A549 (cell line): ENCODE measurements at regions of chr3 and their contacts with region 1.

Region 1: DNA sequence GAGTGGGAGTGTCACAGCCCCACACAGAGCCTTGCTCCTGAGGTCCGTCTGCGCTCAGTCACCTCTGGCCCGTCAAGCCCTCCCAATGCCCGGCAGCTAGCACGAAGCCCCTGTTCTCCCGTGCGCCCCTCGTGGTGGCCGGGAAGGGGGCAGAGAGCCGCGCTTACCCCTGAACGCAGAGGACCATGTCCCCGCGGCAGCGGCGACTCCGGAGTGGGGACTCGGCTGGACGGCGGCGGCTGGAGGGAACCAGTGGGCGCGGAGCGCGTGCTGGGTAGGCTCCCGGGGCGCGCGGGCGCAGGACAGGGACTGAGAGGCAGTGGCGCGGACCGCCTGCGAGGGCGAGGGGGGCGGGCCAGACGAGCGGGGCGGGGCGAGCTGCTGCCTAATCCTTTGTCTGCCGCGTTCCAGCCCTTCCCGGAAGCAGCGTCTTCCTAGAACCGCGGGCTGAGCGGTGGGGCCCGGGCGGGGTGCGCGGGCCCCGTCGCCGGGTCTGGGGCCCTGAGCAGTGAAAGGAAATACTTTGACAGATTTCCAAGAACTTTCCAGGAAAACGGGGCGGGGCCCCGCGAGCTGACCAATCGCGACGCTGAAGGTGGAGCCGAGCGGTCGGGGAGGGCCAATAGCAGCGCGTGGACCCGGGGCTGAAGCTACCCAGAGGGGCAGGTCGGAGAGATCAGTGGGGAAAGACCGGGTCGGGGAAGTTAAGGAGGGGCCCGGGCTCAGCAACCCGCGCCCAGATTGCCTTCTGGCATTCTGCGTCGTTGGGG is at the start of gene CISH:
- DNase-seq: peak; percentile 78 to 83
- ATAC-seq: peak; percentile 65 to 87
- H3K4me3 ChIP-seq: peak within 1 kb of the TSS; percentile 50
- H3K27ac ChIP-seq: peak within 1 kb of the TSS; percentile 72 to 89
- H3K4me1 ChIP-seq: peaks cover 9% of the 10 kb centered on the region
- CTCF ChIP-seq: peak; percentile 15; the same call in 1 of the 3 replicates
- EP300 ChIP-seq: no peak
- POLR2A ChIP-seq: peak; percentile 43; the same call in 1 of the 2 replicates
- RAD21 ChIP-seq: no peak
- polyA plus RNA-seq, gene CISH: 0.43 and 0.95 TPM in 2 replicates

Region 2: DNA sequence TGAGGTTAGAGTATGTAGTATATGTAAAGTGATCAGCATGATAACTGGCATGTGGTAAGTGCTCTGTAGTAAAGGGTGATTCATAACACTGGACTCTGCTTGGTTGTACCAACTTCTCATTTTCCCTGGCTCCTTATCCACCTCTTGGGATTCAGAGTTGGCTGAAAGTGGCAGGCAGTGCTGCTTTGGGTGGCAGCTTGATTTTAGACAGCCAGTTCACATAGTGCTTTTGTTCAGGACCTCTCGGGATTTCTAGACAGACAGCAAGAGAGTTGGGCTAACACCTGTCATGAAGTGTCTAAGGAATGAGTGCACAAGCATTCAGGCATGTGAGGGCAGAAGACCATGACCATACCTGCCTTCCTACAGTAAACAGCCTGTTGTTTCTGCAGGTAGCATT is 602.7 kb before region 1 on chr3:
- CTCF ChIA-PET with region 1: no interaction called
- POLR2A ChIA-PET with region 1: no interaction called
- DNase-seq: peak in 1 of 2 experiments; percentile 4
- ATAC-seq: peak in 1 of 2 experiments; percentile 58; a peak in 3 of 6 replicates
- H3K4me3 ChIP-seq: no peak overlapping the region
- H3K27ac ChIP-seq: no peak overlapping the region
- H3K4me1 ChIP-seq: no peaks in the 10 kb centered on the region
- CTCF ChIP-seq: no peak
- EP300 ChIP-seq: no peak
- POLR2A ChIP-seq: no peak
- RAD21 ChIP-seq: no peak

Region 3: DNA sequence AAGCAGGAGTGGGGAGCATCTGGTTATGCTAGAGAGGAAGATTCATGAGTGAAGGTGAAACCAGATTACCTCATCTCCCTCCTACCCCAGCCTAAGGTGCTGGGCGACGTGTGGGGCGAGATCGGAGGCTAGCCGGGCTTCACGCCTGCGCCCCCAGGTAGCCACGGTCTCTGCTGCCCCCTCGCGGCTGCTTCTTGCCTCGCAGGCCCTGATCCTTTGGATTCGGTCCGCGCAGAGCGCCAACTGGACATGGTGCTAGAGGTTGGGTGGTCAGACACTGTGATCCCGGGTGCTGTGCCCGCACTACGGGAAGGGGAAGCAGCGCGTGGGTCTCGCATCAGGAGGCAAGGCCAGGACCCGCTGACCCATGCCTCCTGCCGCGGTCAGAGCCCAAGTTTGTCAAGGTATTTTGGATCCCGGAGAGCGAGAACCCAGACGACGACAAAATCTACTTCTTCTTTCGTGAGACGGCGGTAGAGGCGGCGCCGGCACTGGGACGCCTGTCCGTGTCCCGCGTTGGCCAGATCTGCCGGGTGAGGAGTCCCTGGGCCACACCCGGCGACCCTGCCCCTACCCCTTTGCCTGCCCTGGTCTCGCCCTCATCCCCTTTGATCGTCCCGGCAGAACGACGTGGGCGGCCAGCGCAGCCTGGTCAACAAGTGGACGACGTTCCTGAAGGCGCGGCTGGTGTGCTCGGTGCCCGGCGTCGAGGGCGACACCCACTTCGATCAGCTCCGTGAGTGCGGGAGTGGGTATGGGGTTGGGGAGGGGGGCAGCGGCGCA is 338.5 kb before region 1 on chr3:
- CTCF ChIA-PET with region 1: no interaction called
- POLR2A ChIA-PET with region 1: no interaction called
- DNase-seq: peak; percentile 74 to 77
- ATAC-seq: peak; percentile 43 to 75
- H3K4me3 ChIP-seq: no peak overlapping the region
- H3K27ac ChIP-seq: 0 out of 6 replicates have a peak overlapping the region, but pooled peaks of 1 of the 2 experiments have one; percentile 37
- H3K4me1 ChIP-seq: peaks cover 41% of the 10 kb centered on the region
- CTCF ChIP-seq: peak; percentile 78
- EP300 ChIP-seq: no peak
- POLR2A ChIP-seq: no peak
- RAD21 ChIP-seq: peak; percentile 91

Region 4: DNA sequence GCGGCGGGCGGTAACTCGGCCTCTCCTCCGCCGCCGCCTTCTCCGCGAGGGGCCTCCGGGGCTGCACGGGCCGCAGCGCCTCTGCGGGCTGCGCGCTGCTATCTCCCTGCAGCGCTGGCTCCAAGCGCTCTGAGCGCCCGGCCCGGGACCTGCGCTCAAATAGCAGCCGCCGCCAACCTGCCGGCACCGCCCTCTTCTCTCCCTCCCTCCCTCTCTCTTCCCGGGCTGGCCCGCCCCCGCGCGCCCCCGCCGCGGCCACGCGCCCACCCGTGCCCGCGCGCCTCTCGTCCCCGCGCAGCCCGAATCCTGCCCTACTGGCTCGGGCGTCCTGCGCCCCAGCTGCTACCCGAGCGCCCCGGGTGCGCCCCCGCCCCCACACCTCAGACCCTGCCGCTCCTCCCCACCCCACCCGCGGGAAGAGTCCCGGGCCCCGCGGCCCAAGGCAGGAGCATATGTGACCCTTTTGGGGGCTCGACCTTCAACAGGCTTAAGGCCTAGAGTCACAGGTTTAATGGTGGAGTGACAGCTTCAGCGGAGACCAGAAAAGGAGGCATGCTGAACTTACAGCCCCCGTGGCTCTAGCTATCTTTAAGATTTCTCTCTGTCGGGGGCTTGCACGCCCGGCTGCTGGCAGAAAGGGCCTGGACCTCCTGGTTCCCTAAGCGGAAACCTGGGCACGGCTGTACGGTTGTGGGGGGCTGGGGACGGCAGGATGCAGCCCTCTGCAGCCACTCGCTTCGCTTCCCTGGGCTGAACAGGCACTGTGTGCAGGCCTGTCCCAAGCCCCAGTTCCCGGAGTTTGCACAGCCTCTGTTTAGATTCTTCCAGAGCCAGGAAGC is 107.9 kb before region 1 on chr3 and contains the start of gene CACNA2D2:
- CTCF ChIA-PET with region 1: no interaction called
- POLR2A ChIA-PET with region 1: no interaction called
- DNase-seq: peak; percentile 25 to 33
- ATAC-seq: peak; percentile 60 to 73; a peak in 5 of 6 replicates
- H3K4me3 ChIP-seq: peak within 1 kb of the TSS; percentile 67
- H3K27ac ChIP-seq: peak within 1 kb of the TSS; percentile 57 to 80; a peak in 5 of 6 replicates
- H3K4me1 ChIP-seq: 0 out of 3 replicates have a peak, but pooled peaks cover 3% of the 10 kb centered on the region
- CTCF ChIP-seq: no peak
- EP300 ChIP-seq: no peak
- POLR2A ChIP-seq: peak; percentile 52
- RAD21 ChIP-seq: no peak
- polyA plus RNA-seq, gene CACNA2D2: 0.21 and 0.22 TPM in 2 replicates

Region 5: GRCh38 chr3:50519471-50520089 is 92.1 kb before region 1 on chr3:
- CTCF ChIA-PET with region 1: interaction called, 21 read pairs
- POLR2A ChIA-PET with region 1: no interaction called
- DNase-seq: peak; percentile 50 to 57
- ATAC-seq: peak; percentile 72 to 94
- H3K4me3 ChIP-seq: no peak overlapping the region
- H3K27ac ChIP-seq: no peak overlapping the region
- H3K4me1 ChIP-seq: no peaks in the 10 kb centered on the region
- CTCF ChIP-seq: peak; percentile 58
- EP300 ChIP-seq: no peak
- POLR2A ChIP-seq: no peak
- RAD21 ChIP-seq: peak; percentile 43 to 50; a peak in 4 of 5 replicates

Region 6: DNA sequence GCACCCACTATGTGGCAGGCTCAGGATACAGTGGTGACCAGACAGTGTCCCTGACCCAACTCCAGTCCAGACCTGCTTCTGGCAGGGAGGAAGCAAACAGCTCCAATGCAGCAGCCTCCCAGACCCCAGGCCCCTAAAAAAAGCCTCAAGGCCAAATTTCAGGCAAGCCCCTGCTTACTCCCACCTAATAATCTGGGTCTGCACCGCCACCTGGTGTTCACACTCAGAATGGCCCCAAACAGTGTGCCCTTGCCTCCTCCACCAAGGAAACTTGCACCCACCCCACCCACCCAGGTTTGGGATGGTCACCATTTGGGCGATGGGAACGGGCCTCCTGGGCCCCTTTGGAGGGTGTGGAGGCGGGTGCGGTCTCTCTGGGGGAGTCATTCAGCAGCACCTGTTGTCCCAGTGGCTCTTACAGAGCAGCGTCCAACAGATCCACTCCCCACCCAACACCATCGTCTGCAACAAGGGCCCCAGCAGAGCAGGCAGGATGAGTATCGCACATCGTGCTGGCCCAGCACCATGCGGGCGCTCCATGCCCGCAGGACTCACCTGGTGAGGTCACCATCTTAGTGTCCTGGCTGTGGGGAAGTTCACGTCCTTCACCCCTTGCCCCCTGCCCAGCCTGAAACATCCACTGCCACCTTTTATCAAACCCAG is 61.4 kb before region 1 on chr3:
- CTCF ChIA-PET with region 1: interaction called, 11 read pairs
- POLR2A ChIA-PET with region 1: no interaction called
- DNase-seq: peak; percentile 32 to 52
- ATAC-seq: peak; percentile 63 to 86; a peak in 3 of 6 replicates
- H3K4me3 ChIP-seq: no peak overlapping the region
- H3K27ac ChIP-seq: no peak overlapping the region
- H3K4me1 ChIP-seq: no peaks in the 10 kb centered on the region
- CTCF ChIP-seq: peak; percentile 63
- EP300 ChIP-seq: no peak
- POLR2A ChIP-seq: no peak
- RAD21 ChIP-seq: peak; percentile 60 to 63

Region 7: GRCh38 chr3:50600841-50601591 is 10.6 kb before region 1 on chr3:
- CTCF ChIA-PET with region 1: interaction called, 107 read pairs
- POLR2A ChIA-PET with region 1: interaction called, 4 read pairs
- DNase-seq: peak; percentile 81 to 89
- ATAC-seq: peak; percentile 85 to 91
- H3K4me3 ChIP-seq: peak overlapping the region; percentile 30; the same call in 2 of the 3 replicates
- H3K27ac ChIP-seq: peak overlapping the region; percentile 97 to 98
- H3K4me1 ChIP-seq: peaks cover 41% of the 10 kb centered on the region
- CTCF ChIP-seq: no peak
- EP300 ChIP-seq: no peak; a peak in 1 of 5 replicates
- POLR2A ChIP-seq: no peak
- RAD21 ChIP-seq: 0 out of 5 replicates have a peak, but pooled peaks of 1 of the 2 experiments have one; percentile 14

Region 8: DNA sequence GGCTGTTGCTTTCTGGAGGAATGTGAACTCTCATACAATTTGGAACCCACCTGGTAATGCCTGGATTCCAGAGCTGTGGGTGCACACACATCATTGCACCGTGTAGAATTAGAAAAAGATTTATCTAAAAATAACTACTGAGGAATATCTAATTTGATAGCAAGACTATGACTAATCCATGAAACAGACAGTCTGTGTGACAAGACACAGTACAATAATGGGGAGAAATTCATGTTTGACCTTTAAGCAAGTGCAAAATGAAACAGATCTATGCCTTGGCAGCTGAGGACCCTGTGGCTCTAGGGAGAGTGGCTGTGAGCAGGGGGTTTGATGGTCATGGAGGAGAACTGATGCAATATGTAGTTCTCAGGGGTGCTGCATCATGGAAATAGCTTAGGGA is 55.2 kb after region 1 on chr3:
- CTCF ChIA-PET with region 1: interaction called, 10 read pairs
- POLR2A ChIA-PET with region 1: no interaction called
- DNase-seq: no peak
- ATAC-seq: no peak
- H3K4me3 ChIP-seq: no peak overlapping the region
- H3K27ac ChIP-seq: no peak overlapping the region
- H3K4me1 ChIP-seq: peaks cover 25% of the 10 kb centered on the region
- CTCF ChIP-seq: no peak
- EP300 ChIP-seq: no peak
- POLR2A ChIP-seq: no peak
- RAD21 ChIP-seq: no peak

Region 9: DNA sequence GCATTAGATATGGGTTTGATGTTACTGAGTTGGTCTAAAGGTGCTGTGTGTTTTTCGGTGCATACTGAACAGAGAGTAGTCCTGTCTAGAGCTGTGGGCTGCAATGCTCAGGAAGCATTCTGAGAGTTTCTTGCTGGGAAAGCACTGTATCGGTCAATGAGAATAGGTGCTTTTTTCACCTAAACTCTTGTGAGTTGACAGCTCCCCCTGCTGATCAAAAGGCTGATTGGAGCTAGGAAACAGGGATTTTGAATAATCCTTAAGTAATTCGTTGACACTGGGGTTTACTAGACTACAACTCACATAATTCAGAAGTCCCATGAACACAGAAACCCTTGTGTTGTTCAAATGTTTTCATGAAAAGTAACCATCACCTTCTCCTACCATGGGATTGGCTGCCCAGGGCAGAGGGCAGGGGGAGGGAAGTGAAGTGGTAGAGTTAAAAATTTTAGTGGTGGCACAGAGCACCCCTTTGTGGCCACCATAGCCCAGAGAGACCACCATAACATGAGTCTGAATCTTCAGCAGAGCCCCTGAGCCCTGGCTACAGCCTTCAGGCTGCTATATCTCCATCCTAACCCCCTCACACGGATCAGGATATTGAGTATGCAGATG is 760.4 kb after region 1 on chr3:
- CTCF ChIA-PET with region 1: interaction called, 115 read pairs
- POLR2A ChIA-PET with region 1: no interaction called
- DNase-seq: peak in 1 of 2 experiments; percentile 68
- ATAC-seq: peak; percentile 75 to 88
- H3K4me3 ChIP-seq: no peak overlapping the region
- H3K27ac ChIP-seq: no peak overlapping the region
- H3K4me1 ChIP-seq: no peaks in the 10 kb centered on the region
- CTCF ChIP-seq: peak; percentile 66
- EP300 ChIP-seq: no peak
- POLR2A ChIP-seq: no peak
- RAD21 ChIP-seq: peak; percentile 82 to 90